Activated CD4-positive, alpha-beta T cell treated with anti-CD3 and anti-CD28 coated beads for 36 hours (primary cell): ENCODE measurements at regions of chr7 and their contacts with region 1.

Region 1: DNA sequence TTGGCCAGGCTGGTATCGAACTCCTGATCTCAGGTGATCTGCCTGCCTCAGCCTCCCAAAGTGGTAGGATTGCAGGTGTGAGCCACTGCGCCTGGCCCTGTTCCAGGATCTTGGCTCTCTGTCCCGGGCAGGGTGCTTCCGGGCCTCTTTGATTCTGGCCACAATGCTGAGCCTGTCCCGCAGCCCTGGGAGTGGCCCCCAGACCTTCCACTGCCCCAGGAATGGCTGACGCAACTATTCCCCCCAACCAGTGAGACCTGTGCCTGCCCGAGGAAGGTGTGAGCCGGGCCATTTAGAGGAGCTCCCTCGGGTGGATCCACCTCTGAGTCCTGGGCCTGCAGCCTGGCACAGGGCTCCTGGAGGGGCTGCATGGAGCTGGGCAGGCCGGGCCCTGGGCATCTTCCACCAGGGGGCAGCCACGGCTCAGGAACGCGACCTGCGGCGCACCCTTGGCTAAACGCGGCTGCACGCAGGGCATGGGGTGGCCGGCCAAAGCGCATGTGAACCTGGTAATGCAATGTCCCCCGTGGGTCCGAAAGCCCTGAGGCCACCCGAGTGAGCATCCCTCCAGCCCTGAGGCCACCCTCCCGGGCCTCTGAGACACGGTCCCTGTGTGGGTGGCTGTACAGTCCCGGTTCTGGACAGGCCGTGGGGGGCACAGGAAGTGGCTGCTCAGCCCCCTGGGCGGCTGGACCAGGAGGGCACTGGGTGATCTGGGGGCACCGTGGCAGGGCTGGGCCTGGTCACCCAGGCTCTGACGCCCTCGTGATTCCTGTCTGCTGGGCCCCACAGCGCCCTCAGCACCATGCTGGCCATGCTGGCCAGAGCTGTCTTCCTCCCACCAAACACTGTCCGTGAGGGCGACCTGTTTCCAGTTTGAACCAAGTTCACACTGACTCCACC is 24.8 kb downstream of the GRIFIN start:
- DNase-seq: peak; percentile 91
- ATAC-seq: peak; percentile 98
- H3K4me3 Mint-ChIP-seq: no peak overlapping the region
- H3K27ac Mint-ChIP-seq: no peak overlapping the region
- H3K4me1 Mint-ChIP-seq: peaks cover 4% of the 10 kb centered on the region
- H3K27me3 Mint-ChIP-seq: no peaks in the 10 kb centered on the region

Region 2: DNA sequence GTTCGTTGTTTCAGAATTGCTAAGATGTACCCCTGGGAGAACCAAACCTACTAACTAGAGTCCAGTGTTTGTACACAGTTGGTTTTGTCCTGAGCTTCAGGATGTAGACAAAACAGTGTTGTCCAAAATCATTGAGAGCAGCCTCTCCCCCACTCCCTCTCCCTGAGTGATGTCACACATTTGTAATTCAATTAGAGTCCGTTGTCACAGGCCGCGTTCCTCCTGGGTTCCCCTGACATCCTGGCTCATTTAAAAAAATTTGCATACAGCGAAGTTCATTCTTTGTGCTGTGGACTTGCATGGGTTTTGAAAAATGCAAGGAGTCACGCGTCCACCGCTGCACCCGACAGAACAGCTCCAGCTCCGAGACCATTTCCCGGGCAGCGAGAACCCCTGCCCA is 14.5 kb after region 1 on chr7:
- CTCF ChIA-PET with region 1: interaction called, 43 read pairs
- POLR2A ChIA-PET with region 1: interaction called, 3 read pairs
- intact Hi-C with region 1: loop called (anchors 1 to 2 kb)
- DNase-seq: no peak
- ATAC-seq: no peak
- H3K4me3 Mint-ChIP-seq: no peak overlapping the region
- H3K27ac Mint-ChIP-seq: no peak overlapping the region
- H3K4me1 Mint-ChIP-seq: no peaks in the 10 kb centered on the region
- H3K27me3 Mint-ChIP-seq: peaks cover 2% of the 10 kb centered on the region

Region 3: GRCh38 chr7:2471396-2471795 is 20.0 kb after region 1 on chr7:
- CTCF ChIA-PET with region 1: interaction called, 43 read pairs
- POLR2A ChIA-PET with region 1: interaction called, 3 read pairs
- intact Hi-C with region 1: loop called (anchors 1 to 2 kb)
- DNase-seq: no peak
- ATAC-seq: no peak
- H3K4me3 Mint-ChIP-seq: no peak overlapping the region
- H3K27ac Mint-ChIP-seq: no peak overlapping the region
- H3K4me1 Mint-ChIP-seq: no peaks in the 10 kb centered on the region
- H3K27me3 Mint-ChIP-seq: peaks cover 2% of the 10 kb centered on the region

Region 4: GRCh38 chr7:2680792-2681490 is 229.5 kb after region 1 on chr7:
- CTCF ChIA-PET with region 1: interaction called, 10 read pairs
- POLR2A ChIA-PET with region 1: no interaction called
- intact Hi-C with region 1: loop called (anchors 1 kb)
- DNase-seq: peak; percentile 79
- ATAC-seq: peak; percentile 73
- H3K4me3 Mint-ChIP-seq: no peak overlapping the region
- H3K27ac Mint-ChIP-seq: no peak overlapping the region
- H3K4me1 Mint-ChIP-seq: no peaks in the 10 kb centered on the region
- H3K27me3 Mint-ChIP-seq: peaks cover 2% of the 10 kb centered on the region